ENCODE measurements at regions of chr12 and their contacts with region 1.

Region 1: DNA sequence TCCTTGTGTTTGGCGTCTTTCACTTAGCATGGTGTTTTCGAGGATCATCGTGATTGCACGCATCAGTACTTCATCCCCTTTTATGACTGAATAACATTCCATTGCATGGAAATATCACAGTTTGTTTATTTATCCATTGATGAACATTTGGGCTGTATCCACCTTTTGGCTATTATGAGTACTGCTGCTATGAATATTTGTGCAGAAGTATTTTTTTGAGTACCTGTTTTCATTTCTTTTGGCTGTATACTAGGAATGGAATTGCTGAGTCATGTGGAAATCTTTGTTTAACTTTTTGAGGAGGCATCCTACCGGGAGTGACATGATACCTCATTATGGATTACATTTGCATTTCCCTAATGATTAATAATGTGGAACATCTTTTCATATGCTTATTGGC is 66.4 kb downstream of the WNK1 start:
- DNase-seq: no peak
- H3K4me3 Mint-ChIP-seq: no peak overlapping the region
- H3K27ac Mint-ChIP-seq: no peak overlapping the region
- H3K4me1 Mint-ChIP-seq: peaks cover 42% of the 10 kb centered on the region
- H3K27me3 Mint-ChIP-seq: no peaks in the 10 kb centered on the region

Region 2: GRCh38 chr12:321607-322326 is 497.0 kb before region 1 on chr12:
- CTCF ChIA-PET with region 1: no interaction called
- intact Hi-C with region 1: no loop called
- DNase-seq: peak; percentile 27
- H3K4me3 Mint-ChIP-seq: no peak overlapping the region
- H3K27ac Mint-ChIP-seq: no peak overlapping the region
- H3K4me1 Mint-ChIP-seq: peaks cover 6% of the 10 kb centered on the region
- H3K27me3 Mint-ChIP-seq: no peaks in the 10 kb centered on the region

Region 3: GRCh38 chr12:614411-614970 is 204.2 kb before region 1 on chr12:
- CTCF ChIA-PET with region 1: interaction called, 76 read pairs
- intact Hi-C with region 1: loop called (anchors 1 kb)
- DNase-seq: peak; percentile 72
- H3K4me3 Mint-ChIP-seq: no peak overlapping the region
- H3K27ac Mint-ChIP-seq: no peak overlapping the region
- H3K4me1 Mint-ChIP-seq: peaks cover 30% of the 10 kb centered on the region
- H3K27me3 Mint-ChIP-seq: no peaks in the 10 kb centered on the region

Region 4: DNA sequence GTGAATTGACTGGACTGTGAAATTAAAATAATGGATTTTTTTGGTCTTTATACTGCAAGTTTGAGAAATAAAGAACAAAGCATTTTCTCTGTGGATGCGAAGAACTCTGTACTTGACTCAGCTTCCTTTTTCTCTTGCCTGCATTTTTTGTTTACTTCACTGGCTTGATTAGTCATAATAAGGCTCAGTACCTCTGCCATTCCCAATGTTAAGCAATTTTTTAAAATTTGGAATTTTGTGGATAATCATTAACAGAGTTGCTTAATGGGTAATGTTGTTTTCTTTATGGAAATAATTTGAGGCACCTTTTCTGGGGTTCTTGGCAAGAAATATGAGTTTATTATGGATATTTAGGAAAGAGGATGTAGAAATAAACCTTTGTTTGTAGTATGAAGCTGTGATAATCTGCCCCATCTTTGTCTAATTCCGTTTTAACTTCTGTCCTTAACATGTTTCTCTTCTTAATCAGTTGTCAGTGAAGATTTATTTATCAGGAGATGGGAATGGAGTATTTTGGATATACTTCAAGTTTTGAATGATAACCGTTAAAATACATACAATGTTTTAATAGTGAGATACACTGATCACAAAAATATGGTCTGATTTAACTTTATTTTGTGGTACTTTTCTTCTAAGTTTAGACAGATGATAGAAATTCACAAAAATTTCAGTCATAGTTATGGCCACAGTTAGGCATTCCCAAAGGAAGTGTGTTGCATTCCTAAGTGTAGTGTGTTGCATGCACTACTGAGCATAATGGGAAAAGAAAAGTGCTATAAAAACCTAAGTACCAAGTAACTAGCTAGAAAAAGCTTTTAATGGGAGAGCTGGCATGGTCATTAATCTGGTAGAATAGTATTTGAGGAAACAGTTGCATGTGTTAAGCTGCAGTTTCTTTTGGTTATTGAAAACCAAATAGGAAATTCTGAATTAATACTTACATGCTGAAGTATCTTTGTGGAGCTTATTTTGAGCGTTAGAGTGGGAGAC is 38.7 kb before region 1 on chr12:
- CTCF ChIA-PET with region 1: interaction called, 18 read pairs
- intact Hi-C with region 1: no loop called
- DNase-seq: no peak
- H3K4me3 Mint-ChIP-seq: peak overlapping the region; percentile 45
- H3K27ac Mint-ChIP-seq: no peak overlapping the region
- H3K4me1 Mint-ChIP-seq: peaks cover 69% of the 10 kb centered on the region
- H3K27me3 Mint-ChIP-seq: no peaks in the 10 kb centered on the region

Region 5: GRCh38 chr12:848173-848865 is 29.6 kb after region 1 on chr12:
- CTCF ChIA-PET with region 1: interaction called, 8 read pairs
- intact Hi-C with region 1: loop called (anchors 2 kb)
- DNase-seq: no peak
- H3K4me3 Mint-ChIP-seq: no peak overlapping the region
- H3K27ac Mint-ChIP-seq: peak overlapping the region; percentile 77
- H3K4me1 Mint-ChIP-seq: peaks cover 50% of the 10 kb centered on the region
- H3K27me3 Mint-ChIP-seq: no peaks in the 10 kb centered on the region

Region 6: GRCh38 chr12:974281-974862 is 155.6 kb after region 1 on chr12:
- CTCF ChIA-PET with region 1: no interaction called
- intact Hi-C with region 1: no loop called
- DNase-seq: no peak
- H3K4me3 Mint-ChIP-seq: no peak overlapping the region
- H3K27ac Mint-ChIP-seq: no peak overlapping the region
- H3K4me1 Mint-ChIP-seq: no peaks in the 10 kb centered on the region
- H3K27me3 Mint-ChIP-seq: no peaks in the 10 kb centered on the region

Region 7: GRCh38 chr12:1093166-1093751 is 274.5 kb after region 1 on chr12:
- CTCF ChIA-PET with region 1: interaction called, 5 read pairs
- intact Hi-C with region 1: loop called (anchors 5 kb)
- DNase-seq: peak; percentile 51
- H3K4me3 Mint-ChIP-seq: no peak overlapping the region
- H3K27ac Mint-ChIP-seq: no peak overlapping the region
- H3K4me1 Mint-ChIP-seq: peaks cover 20% of the 10 kb centered on the region
- H3K27me3 Mint-ChIP-seq: no peaks in the 10 kb centered on the region

Region 8: DNA sequence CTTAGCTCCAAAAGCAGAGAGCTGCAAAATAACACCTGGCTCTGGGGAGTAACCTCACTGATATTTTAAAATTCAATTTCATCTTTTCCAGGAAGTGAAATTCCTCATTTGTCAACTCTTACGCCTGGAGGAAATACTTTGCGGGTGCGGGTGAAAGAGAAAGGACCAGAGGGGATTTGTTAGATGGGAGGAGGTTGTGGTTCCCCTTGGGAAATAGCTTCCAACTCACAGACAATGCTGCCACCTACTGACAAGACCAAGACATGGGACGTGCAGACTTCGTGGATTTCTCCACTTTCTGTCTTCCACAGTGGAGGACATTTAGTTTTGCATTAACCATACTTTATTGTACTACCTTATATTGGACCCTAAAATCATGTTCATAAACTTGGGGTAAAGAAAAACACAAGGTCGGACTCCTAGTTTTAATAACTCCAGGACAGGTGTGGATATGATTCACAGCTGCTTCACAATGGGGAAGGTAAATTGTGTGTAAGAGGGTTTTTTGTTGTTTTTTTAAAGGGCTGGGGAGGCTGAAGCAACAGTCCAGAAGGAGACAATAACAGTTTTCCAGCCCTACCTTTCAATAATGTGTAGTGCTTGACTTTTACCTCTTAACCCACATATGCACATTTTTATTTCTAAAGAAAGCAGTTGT is 764.8 kb after region 1 on chr12:
- CTCF ChIA-PET with region 1: interaction called, 4 read pairs
- intact Hi-C with region 1: loop called (anchors 5 kb)
- DNase-seq: peak; percentile 83
- H3K4me3 Mint-ChIP-seq: no peak overlapping the region
- H3K27ac Mint-ChIP-seq: no peak overlapping the region
- H3K4me1 Mint-ChIP-seq: peaks cover 19% of the 10 kb centered on the region
- H3K27me3 Mint-ChIP-seq: no peaks in the 10 kb centered on the region

Measured in activated naive CD4-positive, alpha-beta T cell treated with anti-CD3 and anti-CD28 coated beads for 36 hours (primary cell).